HepG2 (cell line): ENCODE measurements at regions of chr5 and their contacts with region 1.

Region 1: DNA sequence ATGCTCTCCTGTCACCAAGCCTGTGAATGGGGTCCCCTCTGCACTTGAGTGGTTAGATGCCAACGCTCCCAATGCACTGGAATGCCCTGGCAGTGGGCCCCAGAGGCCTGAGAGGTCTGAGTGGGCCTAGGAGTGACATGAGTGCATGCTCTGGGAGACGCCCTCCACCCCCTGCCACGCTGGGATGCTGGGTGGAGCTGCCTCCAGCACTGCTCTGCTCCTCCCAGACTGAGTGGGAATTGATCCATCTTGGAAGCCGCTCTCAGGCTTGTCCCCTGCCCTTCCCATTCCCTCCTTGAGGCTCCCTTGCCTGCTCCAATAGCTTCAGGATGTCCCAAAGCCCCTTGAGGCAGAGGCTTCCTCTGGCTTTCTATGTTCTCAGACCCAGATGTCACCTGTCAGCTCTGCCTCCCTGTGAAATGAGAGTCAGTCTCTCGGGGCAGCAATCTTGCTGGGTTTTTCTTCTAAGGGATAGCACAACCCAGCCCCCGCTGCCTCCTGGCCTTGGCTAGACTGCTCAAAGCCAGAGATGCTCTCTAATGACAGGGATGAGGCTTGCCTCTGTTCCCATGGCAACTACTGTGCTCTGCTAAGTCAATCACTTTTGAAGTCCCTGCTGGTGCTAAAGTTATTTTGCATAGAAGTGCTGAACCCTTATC is 6.7 kb upstream of the ARSI start:
- DNase-seq: no peak
- ATAC-seq: no peak
- H3K4me3 ChIP-seq: no peak overlapping the region
- H3K27ac ChIP-seq: no peak overlapping the region
- H3K4me1 ChIP-seq: peaks cover 83% of the 10 kb centered on the region
- H3K27me3 ChIP-seq: no peaks in the 10 kb centered on the region
- CTCF ChIP-seq: no peak
- EP300 ChIP-seq: no peak
- POLR2A ChIP-seq: no peak
- RAD21 ChIP-seq: no peak

Region 2: DNA sequence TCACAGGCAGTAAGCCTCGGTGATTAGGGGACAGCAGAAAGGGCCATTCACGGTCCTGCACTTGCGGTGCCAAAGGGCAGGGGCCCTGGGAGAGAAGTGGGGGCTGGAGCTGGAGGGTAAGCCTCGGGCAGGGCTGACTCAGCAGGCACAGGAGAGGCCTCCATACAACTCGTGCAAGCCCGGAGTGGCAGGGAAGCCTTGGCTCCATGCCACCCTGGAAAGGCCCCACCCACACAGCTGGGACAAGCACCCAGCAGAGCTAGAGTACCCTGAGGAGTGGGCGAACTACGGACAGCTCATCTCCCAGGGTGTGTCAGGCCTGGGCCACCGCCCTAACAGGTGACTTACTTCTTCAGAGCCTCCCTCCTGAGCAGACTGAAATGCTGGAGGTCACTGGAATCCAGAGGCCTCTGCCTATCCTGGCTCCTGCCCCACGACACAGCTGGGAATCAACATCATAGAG is 14.2 kb before region 1 on chr5:
- CTCF ChIA-PET with region 1: no interaction called
- POLR2A ChIA-PET with region 1: interaction called, 12 read pairs
- in situ Hi-C with region 1: no loop called
- intact Hi-C with region 1: no loop called
- DNase-seq: peak; percentile 60
- ATAC-seq: peak; percentile 80
- H3K4me3 ChIP-seq: peak overlapping the region in 1 of 3 experiments; percentile 50; a peak in 1 of 6 replicates
- H3K27ac ChIP-seq: no peak overlapping the region
- H3K4me1 ChIP-seq: peaks cover 30% of the 10 kb centered on the region
- H3K27me3 ChIP-seq: no peaks in the 10 kb centered on the region
- CTCF ChIP-seq: no peak
- EP300 ChIP-seq: no peak
- POLR2A ChIP-seq: no peak
- RAD21 ChIP-seq: no peak